ENCODE measurements at regions of chr1 and their contacts with region 1.

Region 1: GRCh38 chr1:25905680-25906643 is at the start of gene STMN1:
- DNase-seq: peak; percentile 62 to 86 (median 79)
- ATAC-seq: peak; percentile 83
- H3K4me3 ChIP-seq: peak within 1 kb of the TSS; percentile 77
- H3K4me3 Mint-ChIP-seq: peak within 1 kb of the TSS; percentile 88 to 98 (median 93)
- H3K27ac ChIP-seq: peak within 1 kb of the TSS; percentile 79
- H3K27ac Mint-ChIP-seq: peak within 1 kb of the TSS; percentile 86 to 97 (median 94)
- H3K4me1 ChIP-seq: peaks cover 8 to 11% of the 10 kb centered on the region in 2 donors
- H3K4me1 Mint-ChIP-seq: peaks cover 11 to 34% (median 22%) of the 10 kb centered on the region in 7 donors
- H3K27me3 ChIP-seq: no peaks in the 10 kb centered on the region
- H3K27me3 Mint-ChIP-seq: peaks cover 0 to 32% (median 0%) of the 10 kb centered on the region in 5 donors
- total RNA-seq, gene STMN1: 29.3 to 347 (median 75.3) TPM

Region 2: GRCh38 chr1:25624156-25624555 is 281.8 kb before region 1 on chr1:
- CTCF ChIA-PET with region 1: no interaction called
- POLR2A ChIA-PET with region 1: no interaction called
- intact Hi-C with region 1: loop called in 1 of 2 experiments (anchors 5 kb)
- DNase-seq: peak in 5 of 9 donors; percentile 43 to 54 (median 51)
- ATAC-seq: peak; percentile 18
- H3K4me3 ChIP-seq: peak overlapping the region; percentile 12
- H3K4me3 Mint-ChIP-seq: peak overlapping the region; percentile 77 to 100 (median 98)
- H3K27ac ChIP-seq: peak overlapping the region; percentile 51
- H3K27ac Mint-ChIP-seq: peak overlapping the region; percentile 47 to 98 (median 92)
- H3K4me1 ChIP-seq: peaks cover 23 to 48% of the 10 kb centered on the region in 2 donors
- H3K4me1 Mint-ChIP-seq: peaks cover 66 to 98% (median 87%) of the 10 kb centered on the region in 7 donors
- H3K27me3 ChIP-seq: no peaks in the 10 kb centered on the region
- H3K27me3 Mint-ChIP-seq: peaks cover 0 to 82% (median 0%) of the 10 kb centered on the region in 5 donors

Region 3: DNA sequence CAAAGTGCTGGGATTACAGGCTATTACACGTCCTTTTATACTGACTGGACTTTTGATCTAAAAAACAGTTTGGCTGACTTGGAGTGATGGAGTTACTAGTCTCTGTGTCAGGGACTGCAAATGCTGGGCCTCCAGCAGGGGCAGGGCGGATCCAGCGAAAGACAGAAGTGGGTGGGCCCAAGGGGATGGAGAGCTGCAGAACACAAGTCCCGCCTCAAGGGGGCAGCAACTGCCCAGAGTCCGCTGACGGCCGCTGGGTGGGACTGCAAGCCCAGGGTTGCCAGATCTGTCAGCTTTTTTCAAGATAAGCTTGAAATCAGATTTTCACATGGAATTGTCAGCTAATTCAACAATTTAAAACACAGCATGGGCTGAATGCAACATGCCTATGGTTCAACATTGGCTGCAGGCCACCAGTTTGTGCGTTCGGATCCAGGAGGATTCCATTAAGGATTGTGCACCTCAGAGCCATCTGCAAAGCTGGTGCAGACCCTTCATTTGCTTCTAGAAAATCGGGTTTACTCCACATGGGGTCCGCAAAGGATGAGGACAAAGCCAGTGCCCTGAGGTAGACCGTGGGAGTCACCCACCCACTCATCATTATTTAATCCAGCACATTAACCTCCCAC is 10.5 kb before region 1 on chr1:
- CTCF ChIA-PET with region 1: interaction called, 43 read pairs
- POLR2A ChIA-PET with region 1: interaction called, 29 read pairs
- intact Hi-C with region 1: loop called (anchors 1 kb)
- DNase-seq: peak; percentile 86 to 96 (median 93)
- ATAC-seq: peak; percentile 100
- H3K4me3 ChIP-seq: no peak overlapping the region
- H3K4me3 Mint-ChIP-seq: peak overlapping the region in 1 of 10 donors; percentile 6
- H3K27ac ChIP-seq: no peak overlapping the region
- H3K27ac Mint-ChIP-seq: peak overlapping the region in 8 of 9 donors; percentile 8 to 76 (median 40)
- H3K4me1 ChIP-seq: peaks cover 0 to 9% of the 10 kb centered on the region in 2 donors
- H3K4me1 Mint-ChIP-seq: peaks cover 7 to 31% (median 11%) of the 10 kb centered on the region in 7 donors
- H3K27me3 ChIP-seq: no peaks in the 10 kb centered on the region
- H3K27me3 Mint-ChIP-seq: no peaks in the 10 kb centered on the region

Region 4: GRCh38 chr1:25971066-25971810 is 65.3 kb after region 1 on chr1:
- CTCF ChIA-PET with region 1: interaction called, 3 read pairs
- POLR2A ChIA-PET with region 1: interaction called, 14 read pairs
- intact Hi-C with region 1: loop called in 1 of 2 experiments (anchors 1 kb)
- DNase-seq: peak in 7 of 9 donors; percentile 60 to 77 (median 69)
- ATAC-seq: peak; percentile 88
- H3K4me3 ChIP-seq: peak overlapping the region; percentile 34
- H3K4me3 Mint-ChIP-seq: peak overlapping the region; percentile 21 to 80 (median 61)
- H3K27ac ChIP-seq: peak overlapping the region; percentile 61
- H3K27ac Mint-ChIP-seq: peak overlapping the region; percentile 74 to 93 (median 85)
- H3K4me1 ChIP-seq: peaks cover 0 to 23% of the 10 kb centered on the region in 2 donors
- H3K4me1 Mint-ChIP-seq: peaks cover 33 to 74% (median 52%) of the 10 kb centered on the region in 7 donors
- H3K27me3 ChIP-seq: no peaks in the 10 kb centered on the region
- H3K27me3 Mint-ChIP-seq: no peaks in the 10 kb centered on the region

Region 5: DNA sequence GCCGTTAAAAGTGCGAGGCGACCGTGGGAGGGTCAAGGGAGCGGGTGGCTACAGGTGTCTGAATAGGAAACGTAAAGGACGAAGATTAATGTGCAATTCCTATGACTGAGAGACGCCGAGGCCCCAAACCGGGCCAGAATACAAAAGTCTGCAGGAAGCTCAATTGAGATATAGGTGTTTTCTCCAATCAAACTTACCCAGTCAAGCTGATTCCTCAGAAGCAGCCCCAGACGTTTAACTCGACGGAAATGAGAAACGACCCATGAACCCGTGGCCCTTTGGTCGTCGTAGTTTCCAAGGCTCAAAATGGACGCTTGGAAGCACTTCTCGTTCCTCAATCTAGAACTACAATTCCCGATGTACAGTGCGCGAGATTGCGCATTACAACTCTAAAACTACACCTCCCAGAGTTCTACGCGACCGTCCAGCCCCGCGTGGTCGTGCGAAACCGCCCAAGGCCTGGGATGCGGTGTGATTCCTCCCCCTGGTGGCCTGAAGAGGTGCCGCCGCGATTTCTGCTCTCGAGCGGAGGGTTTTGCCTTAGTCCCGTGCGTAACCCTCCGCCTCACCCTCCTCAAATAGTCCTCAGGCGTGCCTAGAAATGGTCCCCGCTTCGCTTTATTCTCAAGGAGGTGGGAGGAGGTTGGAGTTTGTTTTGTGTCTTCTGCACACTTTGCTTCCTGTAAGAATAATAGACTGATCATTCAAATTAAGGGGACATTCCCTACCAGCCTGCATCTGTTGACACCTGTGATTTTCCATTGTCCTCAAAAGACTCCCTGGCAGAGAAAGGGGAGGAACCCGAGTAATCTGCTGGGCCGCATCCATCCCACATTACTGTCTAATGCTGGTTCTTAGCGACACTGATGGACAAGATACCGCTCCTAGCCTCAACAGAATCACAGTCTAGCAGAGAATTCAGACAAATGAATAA is 92.1 kb after region 1 on chr1 and contains the start of gene PAFAH2:
- CTCF ChIA-PET with region 1: interaction called, 361 read pairs
- POLR2A ChIA-PET with region 1: interaction called, 226 read pairs
- intact Hi-C with region 1: loop called (anchors 1 kb)
- DNase-seq: peak; percentile 83 to 99 (median 98)
- ATAC-seq: peak; percentile 98
- H3K4me3 ChIP-seq: peak within 1 kb of the TSS; percentile 76
- H3K4me3 Mint-ChIP-seq: peak within 1 kb of the TSS; percentile 91 to 99 (median 96)
- H3K27ac ChIP-seq: peak within 1 kb of the TSS; percentile 89
- H3K27ac Mint-ChIP-seq: peak within 1 kb of the TSS; percentile 96 to 99 (median 99)
- H3K4me1 ChIP-seq: peaks cover 8 to 18% of the 10 kb centered on the region in 2 donors
- H3K4me1 Mint-ChIP-seq: peaks cover 19 to 50% (median 40%) of the 10 kb centered on the region in 7 donors
- H3K27me3 ChIP-seq: no peaks in the 10 kb centered on the region
- H3K27me3 Mint-ChIP-seq: no peaks in the 10 kb centered on the region
- total RNA-seq, gene PAFAH2: 11.4 to 36.0 (median 12.7) TPM

Region 6: DNA sequence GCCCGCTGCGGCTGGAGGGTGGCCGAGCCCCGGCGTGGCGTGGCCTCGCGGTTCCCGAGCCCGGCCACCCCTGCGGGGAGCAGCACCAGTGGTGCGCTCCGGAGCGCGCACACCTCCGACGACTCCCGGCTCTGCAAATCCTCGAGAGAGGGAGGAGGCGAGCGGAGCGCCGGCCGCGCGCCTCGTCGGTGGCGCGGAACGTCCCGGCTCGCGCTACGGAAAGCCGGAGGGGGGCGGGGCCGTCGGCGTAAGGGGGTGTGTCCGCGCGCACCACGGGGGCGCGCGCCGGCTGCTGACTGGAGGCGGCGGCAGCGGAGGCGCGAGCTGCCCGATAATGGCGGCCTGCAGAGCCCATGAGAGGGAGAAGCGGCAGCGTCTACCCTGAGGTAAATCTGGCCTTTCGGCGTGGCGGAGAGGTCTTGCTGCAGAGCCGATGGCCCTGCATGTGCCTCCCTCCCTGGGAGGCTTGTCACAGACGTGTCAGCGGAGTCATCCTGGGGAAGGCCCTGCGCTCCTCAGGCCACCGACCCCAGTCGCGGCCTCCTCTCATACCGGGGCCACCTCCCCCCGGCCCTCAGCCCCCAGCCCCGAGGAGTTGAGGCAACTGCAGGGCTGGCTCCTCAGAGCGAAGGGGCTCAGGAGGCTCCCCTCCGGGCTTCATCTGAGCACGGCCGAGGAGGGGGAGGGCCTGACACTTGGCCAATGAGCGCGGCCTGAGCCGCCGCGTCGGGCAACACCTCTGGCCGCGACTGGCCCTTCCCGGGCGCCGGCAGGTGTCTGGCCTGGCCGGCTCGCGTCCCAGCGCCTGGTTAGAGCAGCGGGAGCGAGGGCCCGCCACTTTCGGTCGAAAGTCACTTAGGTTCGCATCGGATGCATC is 205.8 kb after region 1 on chr1 and contains the start of gene PDIK1L:
- CTCF ChIA-PET with region 1: no interaction called
- POLR2A ChIA-PET with region 1: no interaction called
- intact Hi-C with region 1: loop called in 1 of 2 experiments (anchors 5 kb)
- DNase-seq: peak; percentile 91 to 95 (median 94)
- ATAC-seq: peak; percentile 93
- H3K4me3 ChIP-seq: peak within 1 kb of the TSS; percentile 93
- H3K4me3 Mint-ChIP-seq: peak within 1 kb of the TSS; percentile 86 to 99 (median 93)
- H3K27ac ChIP-seq: peak within 1 kb of the TSS; percentile 84
- H3K27ac Mint-ChIP-seq: peak within 1 kb of the TSS; percentile 84 to 98 (median 92)
- H3K4me1 ChIP-seq: peaks cover 12 to 19% of the 10 kb centered on the region in 2 donors
- H3K4me1 Mint-ChIP-seq: peaks cover 6 to 44% (median 34%) of the 10 kb centered on the region in 7 donors
- H3K27me3 ChIP-seq: no peaks in the 10 kb centered on the region
- H3K27me3 Mint-ChIP-seq: no peaks in the 10 kb centered on the region
- total RNA-seq, gene PDIK1L: 9.1 to 29.6 (median 20.3) TPM

Region 7: DNA sequence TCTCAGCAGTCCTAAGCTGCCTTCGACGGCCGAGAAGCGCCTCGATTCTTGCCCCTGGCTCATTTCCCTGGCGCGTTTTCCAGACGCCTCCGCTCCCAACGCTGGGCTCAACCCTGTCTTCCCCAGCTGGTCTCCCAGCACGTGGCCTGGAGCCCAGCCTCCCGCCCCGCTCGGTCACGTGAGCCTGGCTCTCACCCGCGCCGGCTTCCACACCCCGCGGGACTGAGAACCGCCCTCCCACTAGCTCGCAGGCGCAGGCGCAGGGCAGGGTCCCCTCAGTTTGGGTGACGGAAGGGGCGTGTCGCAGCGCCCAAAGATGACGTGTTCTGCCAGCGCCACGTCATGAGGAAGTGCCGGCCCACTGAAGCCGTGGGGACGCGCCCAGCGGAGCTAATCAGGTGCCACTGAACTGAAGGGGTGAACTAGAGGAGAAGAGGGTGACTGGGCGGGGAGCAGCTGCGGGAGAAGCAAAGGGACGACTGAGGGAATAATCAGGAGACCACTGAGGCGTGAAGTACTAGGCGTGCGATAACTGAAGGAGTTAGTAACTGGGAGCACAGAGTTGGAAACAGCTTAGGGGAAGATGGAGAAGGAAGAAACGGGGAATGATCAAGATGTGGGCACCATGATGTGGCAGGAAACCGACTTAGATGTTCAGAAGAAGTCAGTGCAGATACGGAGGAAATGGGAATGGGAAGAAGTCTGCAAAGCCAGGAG is 526.2 kb after region 1 on chr1 and contains the start of gene DHDDS:
- CTCF ChIA-PET with region 1: no interaction called
- POLR2A ChIA-PET with region 1: no interaction called
- intact Hi-C with region 1: loop called in 1 of 2 experiments (anchors 5 kb)
- DNase-seq: peak; percentile 95 to 98 (median 97)
- ATAC-seq: peak; percentile 99
- H3K4me3 ChIP-seq: peak within 1 kb of the TSS; percentile 88
- H3K4me3 Mint-ChIP-seq: peak within 1 kb of the TSS; percentile 92 to 99 (median 96)
- H3K27ac ChIP-seq: peak within 1 kb of the TSS; percentile 76
- H3K27ac Mint-ChIP-seq: peak within 1 kb of the TSS; percentile 90 to 99 (median 93)
- H3K4me1 ChIP-seq: peaks cover 11 to 15% of the 10 kb centered on the region in 2 donors
- H3K4me1 Mint-ChIP-seq: peaks cover 14 to 26% (median 22%) of the 10 kb centered on the region in 7 donors
- H3K27me3 ChIP-seq: no peaks in the 10 kb centered on the region
- H3K27me3 Mint-ChIP-seq: peaks cover 0 to 15% (median 0%) of the 10 kb centered on the region in 5 donors
- total RNA-seq, gene DHDDS: 28.1 to 58.9 (median 37.7) TPM

Measured in naive thymus-derived CD4-positive, alpha-beta T cell (primary cell).